Psoas muscle (tissue), 8 donors: ENCODE measurements at regions of chr3 and their contacts with region 1.

Region 1: GRCh38 chr3:127970966-127971592 is 56.0 kb downstream of the KBTBD12 start:
- DNase-seq: no peak
- ATAC-seq: peak; percentile 68 to 84 (median 76)
- H3K4me3 ChIP-seq: no peak overlapping the region
- H3K27ac ChIP-seq: no peak overlapping the region
- H3K4me1 ChIP-seq: no peaks in the 10 kb centered on the region
- H3K27me3 ChIP-seq: no peaks in the 10 kb centered on the region
- CTCF ChIP-seq: peak; percentile 66

Region 2: GRCh38 chr3:127652231-127652995 is 318.7 kb before region 1 on chr3:
- intact Hi-C with region 1: loop called (anchors 2 to 5 kb)
- DNase-seq: peak; percentile 58 to 76
- ATAC-seq: peak; percentile 85 to 97 (median 90)
- H3K4me3 ChIP-seq: no peak overlapping the region
- H3K27ac ChIP-seq: no peak overlapping the region
- H3K4me1 ChIP-seq: no peaks in the 10 kb centered on the region
- H3K27me3 ChIP-seq: no peaks in the 10 kb centered on the region
- CTCF ChIP-seq: peak; percentile 93

Region 3: GRCh38 chr3:127848131-127849129 is 122.6 kb before region 1 on chr3:
- intact Hi-C with region 1: no loop called
- DNase-seq: no peak
- ATAC-seq: peak in 1 of 4 donors; percentile 48
- H3K4me3 ChIP-seq: no peak overlapping the region
- H3K27ac ChIP-seq: no peak overlapping the region
- H3K4me1 ChIP-seq: no peaks in the 10 kb centered on the region
- H3K27me3 ChIP-seq: no peaks in the 10 kb centered on the region
- CTCF ChIP-seq: no peak

Region 4: GRCh38 chr3:128369864-128370642 is 399.0 kb after region 1 on chr3:
- intact Hi-C with region 1: no loop called
- DNase-seq: no peak
- ATAC-seq: peak in 1 of 4 donors; percentile 37
- H3K4me3 ChIP-seq: no peak overlapping the region
- H3K27ac ChIP-seq: peak overlapping the region; percentile 58
- H3K4me1 ChIP-seq: peaks cover 61% of the 10 kb centered on the region
- H3K27me3 ChIP-seq: no peaks in the 10 kb centered on the region
- CTCF ChIP-seq: no peak